ENCODE measurements at regions of chr9 and their contacts with region 1.

Region 1: GRCh38 chr9:127734747-127735529 is at the start of gene TOR2A:
- DNase-seq: peak; percentile 91
- H3K4me3 ChIP-seq: peak within 1 kb of the TSS; percentile 72
- H3K27ac ChIP-seq: peak within 1 kb of the TSS; percentile 21
- H3K27me3 ChIP-seq: no peaks in the 10 kb centered on the region
- CTCF ChIP-seq: peak; percentile 90
- polyA plus RNA-seq, gene TOR2A: 4.9 and 5.8 TPM in 2 replicates

Region 2: GRCh38 chr9:127586537-127586936 is 148.4 kb before region 1 on chr9:
- CTCF ChIA-PET with region 1: interaction called, 62 read pairs
- POLR2A ChIA-PET with region 1: interaction called, 9 read pairs
- DNase-seq: no peak
- H3K4me3 ChIP-seq: no peak overlapping the region
- H3K27ac ChIP-seq: no peak overlapping the region
- H3K27me3 ChIP-seq: no peaks in the 10 kb centered on the region
- CTCF ChIP-seq: peak; percentile 94

Region 3: DNA sequence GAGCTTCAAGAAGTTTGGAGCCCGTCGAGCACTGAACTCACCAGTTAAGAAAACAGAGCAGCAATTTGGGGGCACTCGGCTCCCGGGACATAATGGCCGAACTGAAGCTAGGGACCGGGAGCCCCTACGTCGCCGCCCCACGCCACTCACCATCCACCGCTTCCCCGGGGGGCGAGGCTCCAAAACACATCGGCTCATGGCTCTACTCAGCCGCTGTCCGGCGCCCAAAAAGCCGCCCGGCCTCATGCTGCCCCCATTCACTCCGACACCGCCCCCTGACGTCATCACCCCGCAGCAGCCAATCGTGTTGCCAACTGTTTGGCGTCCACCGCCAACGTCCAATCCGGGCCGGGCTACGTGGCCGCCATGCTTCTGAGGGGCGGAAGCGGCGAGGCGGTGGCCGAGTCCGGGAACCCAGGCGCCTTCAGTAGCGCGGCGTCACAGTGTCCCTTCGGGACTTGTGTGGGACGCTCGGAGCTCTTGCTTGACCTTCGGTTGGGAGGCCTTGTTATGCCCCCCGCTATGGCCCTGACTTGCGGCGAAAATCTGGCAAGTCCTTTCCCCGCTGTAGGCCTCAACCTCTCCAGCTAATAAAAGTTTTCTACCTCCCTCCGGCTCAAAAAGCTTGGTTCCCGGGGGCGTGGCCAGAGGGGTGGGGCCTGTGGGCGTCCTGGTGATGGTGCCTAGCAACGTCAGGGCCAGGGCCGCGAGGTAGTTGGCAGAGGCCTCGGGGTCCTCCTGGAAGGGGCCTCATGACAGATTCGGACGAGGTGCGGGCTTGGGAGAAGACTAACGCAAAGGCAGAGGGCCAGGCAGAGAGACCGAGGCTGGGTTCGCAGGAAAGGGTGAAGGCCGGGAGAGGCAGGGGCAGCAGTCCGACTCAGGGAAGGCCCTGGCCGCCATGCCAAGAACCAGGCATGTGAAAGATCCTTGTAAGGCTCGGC is 19.3 kb before region 1 on chr9 and contains the starts of genes PTRH1 and TTC16:
- CTCF ChIA-PET with region 1: interaction called, 21 read pairs
- POLR2A ChIA-PET with region 1: interaction called, 5 read pairs
- DNase-seq: peak; percentile 76
- H3K4me3 ChIP-seq: peak within 1 kb of the TSS; percentile 83
- H3K27ac ChIP-seq: peak within 1 kb of the TSS; percentile 61
- H3K27me3 ChIP-seq: no peaks in the 10 kb centered on the region
- CTCF ChIP-seq: no peak
- polyA plus RNA-seq, gene PTRH1: 5.2 and 6.1 TPM in 2 replicates
- polyA plus RNA-seq, gene TTC16: not detected in 2 replicates

Region 4: DNA sequence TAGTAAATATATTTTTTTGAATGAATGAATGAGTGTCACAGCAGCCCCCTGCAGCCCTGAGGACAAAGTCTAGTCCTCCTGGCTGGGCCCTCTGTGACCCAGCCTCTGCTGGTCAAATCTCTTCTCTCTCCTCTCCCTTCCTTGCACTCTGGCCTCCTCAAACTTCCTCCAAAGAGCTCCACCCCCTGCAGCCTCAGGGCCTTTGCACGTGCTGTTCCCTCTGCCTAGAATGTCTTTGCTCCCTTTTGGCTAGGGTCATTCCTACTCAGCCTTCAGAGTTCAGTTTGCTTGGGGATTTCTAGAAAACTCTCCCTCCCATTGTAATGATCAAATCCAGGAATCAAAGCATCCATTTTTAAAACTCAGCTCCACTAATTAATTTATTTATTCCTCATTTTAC is 30.5 kb after region 1 on chr9:
- CTCF ChIA-PET with region 1: interaction called, 24 read pairs
- POLR2A ChIA-PET with region 1: no interaction called
- DNase-seq: no peak
- H3K4me3 ChIP-seq: no peak overlapping the region
- H3K27ac ChIP-seq: no peak overlapping the region
- H3K27me3 ChIP-seq: peaks cover 24% of the 10 kb centered on the region
- CTCF ChIP-seq: no peak

Region 5: GRCh38 chr9:127869310-127870152 is 134.6 kb after region 1 on chr9:
- CTCF ChIA-PET with region 1: interaction called, 28 read pairs
- POLR2A ChIA-PET with region 1: interaction called, 5 read pairs
- DNase-seq: peak; percentile 36
- H3K4me3 ChIP-seq: no peak overlapping the region
- H3K27ac ChIP-seq: no peak overlapping the region
- H3K27me3 ChIP-seq: no peaks in the 10 kb centered on the region
- CTCF ChIP-seq: peak; percentile 89